OCI-LY7 (cell line): ENCODE measurements at regions of chrX and their contacts with region 1.

Region 1: GRCh38 chrX:107506596-107507031 is 57.2 kb downstream of the FRMPD3 start:
- DNase-seq: no peak
- H3K4me3 ChIP-seq: no peak overlapping the region
- H3K27ac ChIP-seq: no peak overlapping the region
- H3K4me1 ChIP-seq: peaks cover 5% of the 10 kb centered on the region
- CTCF ChIP-seq: no peak

Region 2: DNA sequence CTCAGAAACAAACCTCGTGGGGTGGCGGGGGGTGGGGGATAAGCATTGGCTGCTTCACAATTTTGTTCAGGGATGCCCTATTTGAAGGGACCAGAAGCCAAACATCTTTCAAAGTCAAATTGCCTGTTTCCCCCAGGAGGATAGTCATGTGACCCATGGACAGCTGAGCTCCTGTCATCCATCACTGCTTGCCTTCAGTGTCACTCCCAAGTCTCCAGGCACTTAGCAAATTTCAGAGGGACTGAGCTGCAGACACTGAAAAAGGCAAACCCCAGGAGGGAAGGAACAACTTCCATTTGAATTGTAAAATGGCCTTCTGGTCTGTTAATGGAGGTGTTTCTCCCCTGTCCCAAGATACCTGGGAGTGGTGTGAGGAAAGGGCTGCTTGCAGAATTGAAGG is 16.3 kb after region 1 on chrX:
- CTCF ChIA-PET with region 1: no interaction called
- POLR2A ChIA-PET with region 1: interaction called, 11 read pairs
- intact Hi-C with region 1: no loop called
- DNase-seq: no peak
- H3K4me3 ChIP-seq: no peak overlapping the region
- H3K27ac ChIP-seq: no peak overlapping the region
- H3K4me1 ChIP-seq: no peaks in the 10 kb centered on the region
- CTCF ChIP-seq: no peak

Region 3: DNA sequence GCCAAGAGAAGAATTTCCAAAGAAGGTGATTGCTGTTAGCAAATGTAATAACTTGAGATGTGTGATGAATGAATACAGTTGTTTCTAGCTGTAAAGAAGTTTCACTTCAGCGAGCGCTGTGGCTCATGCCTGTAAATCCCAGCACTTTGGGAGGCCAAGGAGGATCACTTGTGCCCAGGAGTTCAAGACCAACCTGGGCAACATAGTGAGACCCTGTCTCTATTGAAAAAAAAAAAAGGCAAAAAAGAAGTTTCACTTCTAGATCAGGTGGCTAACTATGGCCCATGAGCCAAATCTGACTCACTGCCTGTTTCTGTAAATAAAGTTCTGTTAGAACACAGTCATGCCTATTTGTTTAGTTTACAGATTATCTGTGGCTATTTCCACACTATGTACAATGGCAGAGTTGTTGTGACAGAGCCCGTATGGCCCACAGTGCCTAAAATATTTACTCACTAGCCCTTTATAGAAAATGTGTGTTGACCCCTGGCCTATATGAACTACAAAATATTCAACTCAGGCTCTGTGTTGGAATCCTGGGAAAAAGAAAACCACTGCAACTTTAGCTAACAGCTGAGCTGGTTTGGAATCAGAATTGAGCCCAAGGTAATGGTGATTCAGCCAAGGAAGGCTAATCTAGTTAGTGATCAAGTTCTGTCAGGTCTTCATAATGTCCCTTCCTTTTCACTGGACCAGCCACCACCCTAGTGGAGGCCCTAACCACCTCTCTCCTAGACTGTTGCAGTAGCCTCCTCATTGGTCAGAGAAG is 67.6 kb after region 1 on chrX:
- CTCF ChIA-PET with region 1: no interaction called
- POLR2A ChIA-PET with region 1: no interaction called
- intact Hi-C with region 1: no loop called
- DNase-seq: no peak
- H3K4me3 ChIP-seq: no peak overlapping the region
- H3K27ac ChIP-seq: no peak overlapping the region
- H3K4me1 ChIP-seq: no peaks in the 10 kb centered on the region
- CTCF ChIP-seq: no peak